ENCODE measurements at regions of chr11 and their contacts with region 1.

Region 1: GRCh38 chr11:108697872-108698473 is 33.1 kb downstream of the DDX10 start:
- DNase-seq: peak; percentile 39
- H3K4me3 ChIP-seq: no peak overlapping the region
- H3K27ac ChIP-seq: no peak overlapping the region
- H3K4me1 ChIP-seq: no peaks in the 10 kb centered on the region
- H3K27me3 ChIP-seq: no peaks in the 10 kb centered on the region
- CTCF ChIP-seq: peak; percentile 60

Region 2: GRCh38 chr11:108863528-108863927 is 165.6 kb after region 1 on chr11:
- intact Hi-C with region 1: loop called (anchors 10 kb)
- DNase-seq: no peak
- H3K4me3 ChIP-seq: no peak overlapping the region
- H3K27ac ChIP-seq: no peak overlapping the region
- H3K4me1 ChIP-seq: no peaks in the 10 kb centered on the region
- H3K27me3 ChIP-seq: no peaks in the 10 kb centered on the region
- CTCF ChIP-seq: no peak

Region 3: DNA sequence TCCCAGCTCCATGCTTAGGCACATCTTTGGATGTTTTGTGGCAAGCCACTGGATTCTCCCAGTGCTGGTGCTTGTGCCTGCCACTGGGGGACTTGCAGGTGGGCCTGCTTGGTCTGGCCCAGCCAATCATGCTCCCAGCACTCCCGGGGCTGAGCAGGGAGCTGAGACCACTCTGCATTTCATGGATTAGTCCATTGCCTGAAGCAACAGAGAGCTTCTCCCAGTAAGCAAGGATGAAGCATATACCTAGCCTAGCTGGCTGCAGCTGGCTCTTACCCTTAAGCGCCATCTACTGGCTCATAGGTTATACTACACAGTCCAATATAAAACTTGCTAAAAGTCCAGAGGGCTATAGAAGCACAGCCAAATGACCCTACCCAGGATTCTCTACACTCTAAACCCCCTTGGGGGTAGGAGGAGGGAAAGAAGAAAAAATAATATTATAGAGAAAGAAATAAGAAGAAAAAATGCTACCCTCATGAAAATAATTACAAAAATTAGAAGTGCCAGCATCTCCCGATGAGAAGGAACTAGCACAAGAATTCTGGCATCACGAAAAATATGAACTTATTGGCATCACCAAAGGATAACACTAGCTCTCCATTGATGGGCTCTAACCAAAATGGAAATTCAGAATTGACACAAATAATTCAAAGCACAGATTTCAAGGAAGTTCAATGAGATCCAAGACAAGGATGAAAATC is 999.3 kb after region 1 on chr11:
- intact Hi-C with region 1: loop called (anchors 10 kb)
- DNase-seq: no peak
- H3K4me3 ChIP-seq: no peak overlapping the region
- H3K27ac ChIP-seq: no peak overlapping the region
- H3K4me1 ChIP-seq: no peaks in the 10 kb centered on the region
- H3K27me3 ChIP-seq: no peaks in the 10 kb centered on the region
- CTCF ChIP-seq: peak; percentile 53

Region 4: GRCh38 chr11:109939166-109939810 is 1241.3 kb after region 1 on chr11:
- intact Hi-C with region 1: loop called (anchors 5 kb)
- DNase-seq: peak; percentile 23
- H3K4me3 ChIP-seq: no peak overlapping the region
- H3K27ac ChIP-seq: no peak overlapping the region
- H3K4me1 ChIP-seq: no peaks in the 10 kb centered on the region
- H3K27me3 ChIP-seq: no peaks in the 10 kb centered on the region
- CTCF ChIP-seq: peak; percentile 33

Measured in colonic mucosa (tissue), 4 donors.